B cell (primary cell): ENCODE measurements at regions of chr5 and their contacts with region 1.

Region 1: DNA sequence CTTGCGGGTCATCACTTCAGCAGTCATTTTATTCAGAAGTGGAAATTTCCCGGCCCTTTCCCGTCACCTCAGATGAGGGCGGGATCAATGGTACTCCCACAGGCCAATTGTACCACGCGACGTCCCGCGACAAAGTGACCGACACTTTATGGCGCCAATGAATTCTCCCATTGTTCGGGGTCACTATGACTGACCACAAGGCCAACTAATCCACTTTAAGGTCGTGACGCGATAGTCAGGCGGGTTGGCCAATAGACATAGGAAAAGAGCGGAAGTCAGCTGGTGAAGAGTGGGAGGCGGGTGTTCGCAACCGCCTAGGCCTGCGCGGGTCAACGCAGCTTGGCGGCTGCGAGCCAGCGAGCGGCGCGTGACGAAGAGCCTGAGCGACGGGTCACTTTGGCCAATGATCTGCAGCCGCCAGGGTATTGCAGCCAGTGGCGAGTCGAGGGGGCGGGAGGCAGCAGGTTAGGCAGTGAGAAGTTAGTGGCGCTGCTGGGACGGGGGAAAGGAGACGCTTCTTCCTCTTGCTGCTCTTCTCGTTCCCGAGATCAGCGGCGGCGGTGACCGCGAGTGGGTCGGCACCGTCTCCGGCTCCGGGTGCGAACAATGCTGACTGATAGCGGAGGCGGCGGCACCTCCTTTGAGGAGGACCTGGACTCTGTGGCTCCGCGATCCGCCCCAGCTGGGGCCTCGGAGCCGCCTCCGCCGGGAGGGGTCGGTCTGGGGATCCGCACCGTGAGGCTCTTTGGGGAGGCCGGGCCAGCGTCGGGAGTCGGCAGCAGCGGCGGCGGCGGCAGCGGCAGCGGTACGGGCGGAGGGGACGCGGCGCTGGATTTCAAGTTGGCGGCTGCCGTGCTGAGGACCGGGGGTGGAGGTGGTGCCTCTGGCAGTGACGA is at the start of gene ANKHD1:
- DNase-seq: peak; percentile 100
- ATAC-seq: peak; percentile 77
- H3K4me3 ChIP-seq: peak within 1 kb of the TSS; percentile 80 to 98 (median 92)
- H3K4me3 Mint-ChIP-seq: no peak within 1 kb of the TSS
- H3K27ac ChIP-seq: peak within 1 kb of the TSS; percentile 84 to 91
- H3K27ac Mint-ChIP-seq: no peak within 1 kb of the TSS
- H3K4me1 ChIP-seq: peaks cover 31% of the 10 kb centered on the region in 2 donors
- H3K4me1 Mint-ChIP-seq: peaks cover 31% of the 10 kb centered on the region
- H3K27me3 ChIP-seq: no peaks in the 10 kb centered on the region
- H3K27me3 Mint-ChIP-seq: no peaks in the 10 kb centered on the region
- CTCF ChIP-seq: no peak
- total RNA-seq, gene ANKHD1: 244 and 246 TPM in 2 replicates

Region 2: DNA sequence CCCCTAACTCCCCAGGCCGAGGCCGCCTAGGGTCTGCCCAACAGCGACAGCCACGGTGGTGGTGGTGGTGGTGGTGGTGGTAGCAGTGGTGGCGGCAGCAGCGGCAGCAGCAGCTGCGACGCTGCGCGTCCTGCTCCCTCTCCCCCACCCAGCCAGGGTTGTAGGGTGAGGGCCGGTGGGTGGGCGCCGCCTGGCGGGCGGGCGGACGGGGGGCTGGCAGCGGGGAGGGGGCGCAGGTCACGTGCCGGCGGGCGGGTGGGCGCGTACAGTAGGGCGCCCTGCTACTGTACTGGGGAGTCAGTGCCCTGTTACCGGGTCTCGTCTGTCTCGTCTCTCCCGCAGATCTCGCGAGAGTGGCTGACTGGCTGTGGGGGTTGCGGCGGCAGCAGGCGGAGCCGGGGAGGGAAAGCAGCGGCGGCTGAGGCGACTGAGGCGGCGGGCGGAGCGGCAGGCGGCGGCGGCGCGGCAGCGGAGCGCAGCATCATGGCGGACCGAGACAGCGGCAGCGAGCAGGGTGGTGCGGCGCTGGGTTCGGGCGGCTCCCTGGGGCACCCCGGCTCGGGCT is 287.8 kb before region 1 on chr5 and contains the start of gene PURA:
- CTCF ChIA-PET with region 1: no interaction called
- POLR2A ChIA-PET with region 1: no interaction called
- intact Hi-C with region 1: loop called (anchors 2 kb)
- DNase-seq: peak; percentile 96
- ATAC-seq: peak; percentile 91
- H3K4me3 ChIP-seq: peak within 1 kb of the TSS; percentile 49 to 82 (median 78)
- H3K4me3 Mint-ChIP-seq: peak within 1 kb of the TSS; percentile 98
- H3K27ac ChIP-seq: peak within 1 kb of the TSS; percentile 72 to 87
- H3K27ac Mint-ChIP-seq: peak within 1 kb of the TSS; percentile 99
- H3K4me1 ChIP-seq: peaks cover 40 to 58% of the 10 kb centered on the region in 2 donors
- H3K4me1 Mint-ChIP-seq: peaks cover 71% of the 10 kb centered on the region
- H3K27me3 ChIP-seq: peaks cover 5 to 19% (median 11%) of the 10 kb centered on the region in 4 experiments
- H3K27me3 Mint-ChIP-seq: peaks cover 11% of the 10 kb centered on the region
- CTCF ChIP-seq: peak; percentile 17
- total RNA-seq, gene PURA: 23.5 and 26.0 TPM in 2 replicates

Region 3: GRCh38 chr5:140302786-140303639 is 98.6 kb before region 1 on chr5 and contains the start of gene PFDN1:
- CTCF ChIA-PET with region 1: no interaction called
- POLR2A ChIA-PET with region 1: no interaction called
- intact Hi-C with region 1: loop called (anchors 2 kb)
- DNase-seq: peak; percentile 94
- ATAC-seq: peak; percentile 98
- H3K4me3 ChIP-seq: peak within 1 kb of the TSS; percentile 85 to 96 (median 91)
- H3K4me3 Mint-ChIP-seq: peak within 1 kb of the TSS; percentile 97
- H3K27ac ChIP-seq: peak within 1 kb of the TSS; percentile 74 to 82
- H3K27ac Mint-ChIP-seq: peak within 1 kb of the TSS; percentile 95
- H3K4me1 ChIP-seq: peaks cover 12% of the 10 kb centered on the region in 2 donors
- H3K4me1 Mint-ChIP-seq: peaks cover 13% of the 10 kb centered on the region
- H3K27me3 ChIP-seq: no peaks in the 10 kb centered on the region
- H3K27me3 Mint-ChIP-seq: peaks cover 9% of the 10 kb centered on the region
- CTCF ChIP-seq: no peak
- total RNA-seq, gene PFDN1: 29.8 and 30.3 TPM in 2 replicates

Region 4: DNA sequence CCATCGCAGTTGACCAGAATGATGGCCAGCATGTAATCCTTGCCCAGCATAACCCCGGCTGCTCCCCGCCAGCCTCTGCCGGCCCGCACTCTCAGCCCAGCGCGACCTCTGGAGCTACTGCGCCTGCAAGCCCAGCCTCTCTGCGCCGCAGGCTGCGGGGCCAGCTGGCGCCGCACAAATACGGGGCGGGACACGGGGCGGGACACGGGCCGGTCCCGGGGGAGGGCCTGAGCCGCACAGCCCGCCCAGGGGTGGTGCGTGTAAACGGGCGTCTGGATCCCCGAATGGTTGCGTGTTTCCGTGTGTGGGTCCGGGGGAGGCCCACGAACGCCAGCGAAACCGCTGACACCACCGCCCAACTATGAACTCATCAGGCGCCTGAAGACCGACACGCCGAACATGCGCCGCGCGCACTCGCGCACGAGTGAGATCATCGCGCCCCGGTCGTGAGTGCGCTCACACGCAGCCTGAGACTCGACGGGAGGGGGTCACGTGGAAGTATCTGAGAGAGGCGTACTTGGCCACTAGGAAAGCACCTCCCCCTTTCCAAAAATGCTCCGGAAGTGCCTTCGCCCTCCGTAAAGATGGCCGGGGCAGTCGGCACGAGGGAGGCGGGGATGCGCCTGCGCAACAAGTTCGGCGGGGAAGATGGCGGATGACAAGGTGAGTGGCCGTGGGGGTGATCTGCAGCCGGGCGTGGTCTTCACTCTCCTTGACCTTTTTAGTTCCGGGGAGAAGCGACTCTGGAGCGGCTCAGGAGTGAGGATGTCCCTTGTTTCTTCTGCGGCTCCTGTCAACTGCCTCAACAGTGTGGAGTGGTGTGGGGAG is 162.8 kb after region 1 on chr5 and contains the starts of genes APBB3 and SLC35A4:
- CTCF ChIA-PET with region 1: no interaction called
- POLR2A ChIA-PET with region 1: no interaction called
- intact Hi-C with region 1: loop called (anchors 1 kb)
- DNase-seq: peak; percentile 99
- ATAC-seq: peak; percentile 89
- H3K4me3 ChIP-seq: peak within 1 kb of the TSS; percentile 71 to 95 (median 91)
- H3K4me3 Mint-ChIP-seq: peak within 1 kb of the TSS; percentile 90
- H3K27ac ChIP-seq: peak within 1 kb of the TSS; percentile 91 to 92
- H3K27ac Mint-ChIP-seq: peak within 1 kb of the TSS; percentile 97
- H3K4me1 ChIP-seq: peaks cover 25 to 36% of the 10 kb centered on the region in 2 donors
- H3K4me1 Mint-ChIP-seq: peaks cover 48% of the 10 kb centered on the region
- H3K27me3 ChIP-seq: no peaks in the 10 kb centered on the region
- H3K27me3 Mint-ChIP-seq: no peaks in the 10 kb centered on the region
- CTCF ChIP-seq: no peak
- total RNA-seq, gene APBB3: 73.9 and 79.7 TPM in 2 replicates
- total RNA-seq, gene SLC35A4: 44.0 and 48.6 TPM in 2 replicates

Region 5: GRCh38 chr5:140664359-140665119 is 262.9 kb after region 1 on chr5 and contains the start of gene WDR55:
- CTCF ChIA-PET with region 1: no interaction called
- POLR2A ChIA-PET with region 1: no interaction called
- intact Hi-C with region 1: loop called (anchors 1 kb)
- DNase-seq: peak; percentile 94
- ATAC-seq: peak; percentile 97
- H3K4me3 ChIP-seq: peak within 1 kb of the TSS; percentile 56 to 99 (median 98)
- H3K4me3 Mint-ChIP-seq: peak within 1 kb of the TSS; percentile 99
- H3K27ac ChIP-seq: peak within 1 kb of the TSS; percentile 74 to 88
- H3K27ac Mint-ChIP-seq: peak within 1 kb of the TSS; percentile 98
- H3K4me1 ChIP-seq: peaks cover 14 to 17% of the 10 kb centered on the region in 2 donors
- H3K4me1 Mint-ChIP-seq: peaks cover 30% of the 10 kb centered on the region
- H3K27me3 ChIP-seq: no peaks in the 10 kb centered on the region
- H3K27me3 Mint-ChIP-seq: no peaks in the 10 kb centered on the region
- CTCF ChIP-seq: no peak
- total RNA-seq, gene WDR55: 44.7 and 46.2 TPM in 2 replicates

Region 6: GRCh38 chr5:140710899-140711552 is 309.4 kb after region 1 on chr5:
- CTCF ChIA-PET with region 1: interaction called, 3 read pairs
- POLR2A ChIA-PET with region 1: no interaction called
- intact Hi-C with region 1: loop called (anchors 1 kb)
- DNase-seq: peak; percentile 96
- ATAC-seq: peak; percentile 85
- H3K4me3 ChIP-seq: peak overlapping the region; percentile 69 to 98 (median 73)
- H3K4me3 Mint-ChIP-seq: peak overlapping the region; percentile 95
- H3K27ac ChIP-seq: peak overlapping the region; percentile 64 to 78
- H3K27ac Mint-ChIP-seq: peak overlapping the region; percentile 96
- H3K4me1 ChIP-seq: peaks cover 5 to 11% of the 10 kb centered on the region in 2 donors
- H3K4me1 Mint-ChIP-seq: peaks cover 14% of the 10 kb centered on the region
- H3K27me3 ChIP-seq: no peaks in the 10 kb centered on the region
- H3K27me3 Mint-ChIP-seq: no peaks in the 10 kb centered on the region
- CTCF ChIP-seq: no peak